Colonic mucosa (tissue), 4 donors: ENCODE measurements at regions of chr7 and their contacts with region 1.

Region 1: DNA sequence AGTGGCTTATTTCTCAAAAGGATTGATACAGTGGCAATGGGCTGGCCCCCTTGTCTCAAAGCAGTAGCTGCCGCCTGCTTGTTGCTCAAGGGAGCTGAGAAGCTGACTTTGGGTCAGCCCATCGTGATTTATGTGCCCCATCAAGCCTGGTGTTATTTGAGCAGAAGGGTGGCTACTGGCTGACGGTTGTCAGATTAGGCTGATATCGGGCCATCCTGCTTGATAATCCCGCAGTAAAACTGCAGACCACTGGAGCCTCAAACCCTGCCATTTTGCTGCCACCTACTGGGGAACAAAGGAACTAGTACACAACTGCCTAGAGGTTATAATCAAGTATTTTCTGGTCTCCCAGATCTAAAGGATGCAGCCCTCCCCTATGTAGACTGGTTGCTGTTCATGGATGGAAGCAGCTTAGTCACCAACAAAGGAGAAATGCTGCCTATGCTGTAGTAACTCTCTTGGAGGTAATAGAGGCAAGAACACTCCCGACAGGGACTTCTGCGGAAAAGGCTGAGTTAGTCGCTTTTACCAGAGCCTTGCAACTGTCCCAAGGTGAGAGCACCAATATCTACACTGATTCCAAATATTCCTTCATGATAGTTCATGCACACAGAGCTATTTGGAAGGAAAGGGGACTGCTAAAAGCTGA is 65.9 kb upstream of the ZNF92 start:
- DNase-seq: peak; percentile 46
- H3K4me3 ChIP-seq: no peak overlapping the region
- H3K27ac ChIP-seq: no peak overlapping the region
- H3K4me1 ChIP-seq: no peaks in the 10 kb centered on the region
- H3K27me3 ChIP-seq: no peaks in the 10 kb centered on the region
- CTCF ChIP-seq: peak; percentile 84

Region 2: GRCh38 chr7:64541438-64542359 is 766.1 kb before region 1 on chr7:
- intact Hi-C with region 1: no loop called
- DNase-seq: no peak
- H3K4me3 ChIP-seq: no peak overlapping the region
- H3K27ac ChIP-seq: no peak overlapping the region
- H3K4me1 ChIP-seq: no peaks in the 10 kb centered on the region
- H3K27me3 ChIP-seq: no peaks in the 10 kb centered on the region
- CTCF ChIP-seq: no peak

Region 3: DNA sequence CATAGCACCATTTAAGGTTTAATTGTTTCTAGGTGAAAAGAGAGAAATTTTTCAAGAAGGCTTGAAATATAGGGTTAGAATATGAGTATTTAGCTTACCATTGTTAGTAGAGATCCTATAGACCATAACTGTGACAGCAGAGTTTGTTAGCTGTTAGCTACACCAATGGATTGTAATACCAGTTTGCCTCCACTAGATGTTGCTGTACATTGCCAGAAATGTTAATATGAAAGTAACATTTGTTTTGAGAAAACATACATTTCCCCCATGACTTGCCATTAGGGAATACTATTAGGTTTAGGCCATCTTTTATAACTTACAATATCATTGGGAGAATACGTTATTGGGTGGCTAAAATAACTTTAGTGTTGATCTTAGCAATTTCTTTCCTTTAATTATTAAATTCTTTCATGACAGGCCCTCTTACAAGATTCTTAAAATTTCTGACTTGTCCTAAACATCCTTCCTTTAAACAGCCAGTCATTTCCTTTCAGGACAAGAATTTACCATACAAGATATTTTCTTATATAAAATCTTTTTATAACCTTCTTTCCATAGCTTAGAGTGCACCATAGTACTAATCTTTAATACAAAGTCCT is 356.4 kb before region 1 on chr7:
- intact Hi-C with region 1: loop called (anchors 5 kb)
- DNase-seq: no peak
- H3K4me3 ChIP-seq: no peak overlapping the region
- H3K27ac ChIP-seq: no peak overlapping the region
- H3K4me1 ChIP-seq: peaks cover 5% of the 10 kb centered on the region
- H3K27me3 ChIP-seq: peaks cover 15% of the 10 kb centered on the region
- CTCF ChIP-seq: peak; percentile 60

Region 4: DNA sequence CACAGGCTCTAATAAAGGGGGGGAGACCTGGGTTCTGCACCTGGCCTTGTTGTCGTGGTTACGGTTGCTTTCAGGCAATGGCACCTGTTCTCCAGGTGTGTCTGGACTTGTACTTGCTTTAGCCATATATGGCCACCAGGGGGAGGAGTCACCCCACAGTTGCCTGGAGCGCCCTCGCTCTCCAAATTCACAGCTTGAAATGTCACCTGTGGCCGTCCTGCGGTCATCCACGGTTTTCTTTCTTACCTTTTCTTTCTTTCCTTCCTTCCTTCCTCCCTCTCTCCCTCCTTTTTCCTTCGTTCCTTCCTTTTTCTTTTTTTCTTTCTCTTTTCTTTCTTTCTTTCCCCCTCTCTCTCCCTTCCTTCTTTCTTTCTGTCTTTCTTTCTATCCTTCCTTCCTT is 91.3 kb before region 1 on chr7:
- intact Hi-C with region 1: loop called (anchors 5 kb)
- DNase-seq: peak; percentile 70
- H3K4me3 ChIP-seq: no peak overlapping the region
- H3K27ac ChIP-seq: no peak overlapping the region
- H3K4me1 ChIP-seq: no peaks in the 10 kb centered on the region
- H3K27me3 ChIP-seq: no peaks in the 10 kb centered on the region
- CTCF ChIP-seq: peak; percentile 50

Region 5: DNA sequence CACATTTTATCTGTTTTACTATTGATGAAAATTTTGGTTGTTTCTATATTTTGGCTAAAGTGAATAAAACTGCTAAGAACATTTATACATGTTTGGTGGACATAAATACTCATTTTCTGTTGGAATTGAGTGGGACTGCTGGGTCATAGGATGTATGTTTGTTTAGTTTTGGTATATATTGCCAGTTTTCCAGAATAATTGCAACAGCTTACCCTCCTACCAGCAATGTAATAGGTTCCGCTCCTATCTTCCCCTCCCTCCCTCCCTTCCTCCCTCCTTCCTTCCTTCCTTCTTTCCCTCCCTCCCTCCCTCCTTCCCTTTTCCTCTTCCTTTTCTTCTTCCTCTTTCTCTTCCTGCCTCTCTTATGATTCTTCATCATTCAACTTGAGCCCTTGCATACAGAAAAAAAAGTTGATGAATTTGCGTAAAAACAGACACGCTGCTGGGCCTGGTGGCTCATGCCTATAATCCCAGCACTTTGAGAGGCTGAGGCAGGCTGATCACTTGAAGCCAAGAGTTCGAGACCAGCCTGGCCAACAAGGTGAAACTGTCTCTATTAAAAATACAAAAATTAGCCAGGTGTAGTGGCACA is 588.6 kb after region 1 on chr7:
- intact Hi-C with region 1: no loop called
- DNase-seq: no peak
- H3K4me3 ChIP-seq: no peak overlapping the region
- H3K27ac ChIP-seq: no peak overlapping the region
- H3K4me1 ChIP-seq: no peaks in the 10 kb centered on the region
- H3K27me3 ChIP-seq: no peaks in the 10 kb centered on the region
- CTCF ChIP-seq: no peak